ENCODE measurements at regions of chr19 and their contacts with region 1.

Region 1: DNA sequence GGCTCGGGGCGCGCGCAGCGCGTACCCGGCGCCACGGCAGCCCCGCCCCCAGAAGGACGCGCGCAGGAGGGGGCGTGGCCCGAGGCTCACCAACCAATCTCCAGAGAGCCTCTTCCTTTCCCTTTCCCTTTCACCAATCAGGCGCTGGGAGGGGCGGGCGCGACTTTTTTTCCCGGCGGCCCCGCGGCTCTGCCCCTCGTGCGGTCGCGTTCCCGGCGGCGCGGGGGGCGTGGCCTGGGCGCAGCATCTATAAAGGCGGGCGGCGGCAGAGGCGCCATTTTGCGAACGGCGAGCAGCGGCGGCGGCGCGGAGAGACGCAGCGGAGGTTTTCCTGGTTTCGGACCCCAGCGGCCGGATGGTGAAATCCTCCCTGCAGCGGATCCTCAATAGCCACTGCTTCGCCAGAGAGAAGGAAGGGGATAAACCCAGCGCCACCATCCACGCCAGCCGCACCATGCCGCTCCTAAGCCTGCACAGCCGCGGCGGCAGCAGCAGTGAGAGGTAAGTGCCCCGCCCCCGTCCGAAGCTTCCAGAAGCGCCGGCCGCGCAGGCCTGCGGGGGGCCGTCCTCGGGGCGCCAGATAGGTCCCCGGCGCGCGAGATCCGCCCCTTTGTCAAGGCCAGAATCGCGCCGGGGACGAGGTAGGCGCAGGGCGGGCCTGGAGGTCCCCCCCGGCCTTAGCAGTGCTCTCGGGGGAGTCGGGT is 12.6 kb downstream of the PEAK3 start:
- DNase-seq: peak; percentile 97 to 100 (median 99)
- H3K4me3 ChIP-seq: peak overlapping the region; percentile 86
- H3K4me3 Mint-ChIP-seq: peak overlapping the region; percentile 84 to 99 (median 92)
- H3K27ac ChIP-seq: peak overlapping the region; percentile 89
- H3K27ac Mint-ChIP-seq: peak overlapping the region; percentile 86 to 98 (median 90)
- H3K4me1 ChIP-seq: peaks cover 41% of the 10 kb centered on the region
- H3K4me1 Mint-ChIP-seq: peaks cover 27 to 43% (median 28%) of the 10 kb centered on the region in 3 donors
- H3K27me3 ChIP-seq: no peaks in the 10 kb centered on the region
- H3K27me3 Mint-ChIP-seq: peaks cover 0 to 7% of the 10 kb centered on the region in 2 donors

Region 2: DNA sequence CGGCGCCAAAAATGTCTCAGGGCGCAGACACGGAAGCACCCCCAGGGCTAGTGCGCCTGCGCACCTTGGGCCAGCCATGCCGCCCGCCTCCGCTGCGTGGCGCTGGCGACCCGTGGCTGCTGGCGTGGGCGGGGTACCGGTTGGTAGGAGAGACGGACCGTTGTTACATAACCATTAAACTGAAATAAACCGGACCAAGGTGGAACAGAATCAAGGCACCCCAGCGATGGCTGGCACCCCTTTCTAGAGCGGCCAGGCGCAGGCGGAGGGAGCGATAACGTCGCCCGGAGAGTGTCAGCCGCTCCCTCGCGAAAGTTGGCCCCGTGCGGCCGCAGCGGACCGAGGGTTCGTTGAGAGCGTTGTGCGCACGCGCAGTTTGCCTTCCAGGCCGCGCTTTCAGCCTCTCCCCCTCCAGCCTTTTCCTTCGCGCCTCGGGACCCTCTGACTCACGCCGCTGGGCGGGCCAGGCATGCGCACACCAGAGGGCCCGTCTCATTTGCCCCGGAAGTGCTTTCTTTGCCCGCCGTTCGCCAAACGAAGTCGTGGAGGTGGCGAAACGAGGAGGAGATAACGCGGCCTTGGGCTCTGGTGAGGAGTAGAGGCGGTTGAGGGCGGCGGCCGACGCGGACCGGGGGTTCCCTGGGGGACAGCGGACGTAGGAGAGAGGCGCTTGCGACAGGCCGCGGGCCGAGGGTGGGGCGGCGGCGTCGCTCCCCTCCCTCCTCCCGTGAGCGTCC is 32.9 kb before region 1 on chr19 and contains the starts of genes PLEKHJ1 and SF3A2:
- CTCF ChIA-PET with region 1: interaction called, 70 read pairs
- POLR2A ChIA-PET with region 1: interaction called, 67 read pairs
- DNase-seq: peak; percentile 96 to 100 (median 99)
- H3K4me3 ChIP-seq: peak within 1 kb of the TSS; percentile 88
- H3K4me3 Mint-ChIP-seq: peak within 1 kb of the TSS; percentile 89 to 100 (median 98)
- H3K27ac ChIP-seq: peak within 1 kb of the TSS; percentile 98
- H3K27ac Mint-ChIP-seq: peak within 1 kb of the TSS; percentile 92 to 99 (median 98)
- H3K4me1 ChIP-seq: peaks cover 60% of the 10 kb centered on the region
- H3K4me1 Mint-ChIP-seq: peaks cover 58 to 77% (median 63%) of the 10 kb centered on the region in 3 donors
- H3K27me3 ChIP-seq: no peaks in the 10 kb centered on the region
- H3K27me3 Mint-ChIP-seq: peaks cover 0 to 5% of the 10 kb centered on the region in 2 donors
- total RNA-seq, gene PLEKHJ1: 96.6 to 99.1 TPM
- total RNA-seq, gene SF3A2: 131 to 138 TPM

Region 3: GRCh38 chr19:2282062-2282861 is 12.9 kb after region 1 on chr19 and contains the start of gene PEAK3:
- CTCF ChIA-PET with region 1: interaction called, 33 read pairs
- POLR2A ChIA-PET with region 1: interaction called, 7 read pairs
- DNase-seq: peak in 2 of 5 donors; percentile 37 to 68
- H3K4me3 ChIP-seq: peak within 1 kb of the TSS; percentile 22
- H3K4me3 Mint-ChIP-seq: peak within 1 kb of the TSS in 6 of 7 donors; percentile 62 to 80 (median 72)
- H3K27ac ChIP-seq: peak within 1 kb of the TSS; percentile 16
- H3K27ac Mint-ChIP-seq: peak within 1 kb of the TSS in 6 of 8 donors; percentile 4 to 85 (median 80)
- H3K4me1 ChIP-seq: peaks cover 15% of the 10 kb centered on the region
- H3K4me1 Mint-ChIP-seq: peaks cover 10 to 20% (median 12%) of the 10 kb centered on the region in 3 donors
- H3K27me3 ChIP-seq: no peaks in the 10 kb centered on the region
- H3K27me3 Mint-ChIP-seq: peaks cover 0 to 2% of the 10 kb centered on the region in 2 donors
- total RNA-seq, gene PEAK3: not detected

Region 4: DNA sequence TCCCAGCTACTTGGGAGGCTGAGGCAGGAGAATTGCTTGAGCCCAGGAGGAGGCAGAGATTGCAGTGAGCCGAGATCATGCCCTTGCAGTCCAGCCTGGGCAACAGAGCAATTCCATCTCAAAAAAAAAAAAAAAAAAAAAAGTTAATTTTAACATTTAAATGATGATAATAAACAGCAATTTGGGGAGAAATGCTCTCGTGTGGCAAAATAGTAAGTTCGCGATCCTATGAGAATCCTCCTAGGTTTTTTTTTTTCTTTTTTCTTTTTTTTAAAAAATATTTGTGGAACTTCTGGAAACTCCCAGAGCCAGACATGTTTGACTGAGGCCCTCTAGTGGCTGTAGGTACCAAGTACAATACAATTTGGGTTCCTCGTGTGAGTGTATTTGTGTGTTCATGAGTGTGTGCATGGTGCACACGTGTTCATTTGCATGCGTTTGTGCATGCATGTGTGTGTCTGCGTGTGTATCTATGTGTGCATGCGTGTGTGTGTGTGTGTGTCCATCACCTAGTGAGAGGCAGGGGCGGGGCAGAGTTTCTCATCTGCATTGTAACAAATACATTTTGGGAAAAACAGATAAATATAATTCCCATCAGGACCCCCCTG is 121.8 kb after region 1 on chr19:
- CTCF ChIA-PET with region 1: interaction called, 35 read pairs
- POLR2A ChIA-PET with region 1: no interaction called
- DNase-seq: peak in 4 of 5 donors; percentile 6 to 58 (median 54)
- H3K4me3 ChIP-seq: no peak overlapping the region
- H3K4me3 Mint-ChIP-seq: no peak overlapping the region
- H3K27ac ChIP-seq: no peak overlapping the region
- H3K27ac Mint-ChIP-seq: no peak overlapping the region
- H3K4me1 ChIP-seq: no peaks in the 10 kb centered on the region
- H3K4me1 Mint-ChIP-seq: peaks cover 4 to 15% (median 4%) of the 10 kb centered on the region in 3 donors
- H3K27me3 ChIP-seq: no peaks in the 10 kb centered on the region
- H3K27me3 Mint-ChIP-seq: peaks cover 10 to 12% of the 10 kb centered on the region in 2 donors

Region 5: GRCh38 chr19:2507109-2507508 is 237.7 kb after region 1 on chr19:
- CTCF ChIA-PET with region 1: no interaction called
- POLR2A ChIA-PET with region 1: no interaction called
- DNase-seq: peak in 3 of 5 donors; percentile 36 to 62 (median 57)
- H3K4me3 ChIP-seq: no peak overlapping the region
- H3K4me3 Mint-ChIP-seq: peak overlapping the region in 5 of 7 donors; percentile 34 to 65 (median 46)
- H3K27ac ChIP-seq: peak overlapping the region; percentile 43
- H3K27ac Mint-ChIP-seq: peak overlapping the region in 7 of 8 donors; percentile 18 to 90 (median 72)
- H3K4me1 ChIP-seq: peaks cover 24% of the 10 kb centered on the region
- H3K4me1 Mint-ChIP-seq: peaks cover 19 to 40% (median 20%) of the 10 kb centered on the region in 3 donors
- H3K27me3 ChIP-seq: no peaks in the 10 kb centered on the region
- H3K27me3 Mint-ChIP-seq: no peaks in the 10 kb centered on the region

Measured in CD8-positive, alpha-beta memory T cell (primary cell).